ENCODE measurements at regions of chr12 and their contacts with region 1.

Region 1: GRCh38 chr12:30754709-30755394 is at the start of gene CAPRIN2:
- DNase-seq: peak; percentile 92 to 94 (median 93)
- H3K4me3 ChIP-seq: peak within 1 kb of the TSS; percentile 60 to 74
- H3K4me3 Mint-ChIP-seq: peak within 1 kb of the TSS; percentile 94 to 98 (median 96)
- H3K27ac ChIP-seq: peak within 1 kb of the TSS; percentile 67
- H3K27ac Mint-ChIP-seq: peak within 1 kb of the TSS; percentile 89 to 95 (median 94)
- H3K4me1 ChIP-seq: peaks cover 20% of the 10 kb centered on the region
- H3K4me1 Mint-ChIP-seq: peaks cover 20 to 50% (median 37%) of the 10 kb centered on the region in 4 donors
- H3K27me3 ChIP-seq: no peaks in the 10 kb centered on the region
- H3K27me3 Mint-ChIP-seq: no peaks in the 10 kb centered on the region
- total RNA-seq, gene CAPRIN2: 42.9 to 47.0 TPM

Region 2: DNA sequence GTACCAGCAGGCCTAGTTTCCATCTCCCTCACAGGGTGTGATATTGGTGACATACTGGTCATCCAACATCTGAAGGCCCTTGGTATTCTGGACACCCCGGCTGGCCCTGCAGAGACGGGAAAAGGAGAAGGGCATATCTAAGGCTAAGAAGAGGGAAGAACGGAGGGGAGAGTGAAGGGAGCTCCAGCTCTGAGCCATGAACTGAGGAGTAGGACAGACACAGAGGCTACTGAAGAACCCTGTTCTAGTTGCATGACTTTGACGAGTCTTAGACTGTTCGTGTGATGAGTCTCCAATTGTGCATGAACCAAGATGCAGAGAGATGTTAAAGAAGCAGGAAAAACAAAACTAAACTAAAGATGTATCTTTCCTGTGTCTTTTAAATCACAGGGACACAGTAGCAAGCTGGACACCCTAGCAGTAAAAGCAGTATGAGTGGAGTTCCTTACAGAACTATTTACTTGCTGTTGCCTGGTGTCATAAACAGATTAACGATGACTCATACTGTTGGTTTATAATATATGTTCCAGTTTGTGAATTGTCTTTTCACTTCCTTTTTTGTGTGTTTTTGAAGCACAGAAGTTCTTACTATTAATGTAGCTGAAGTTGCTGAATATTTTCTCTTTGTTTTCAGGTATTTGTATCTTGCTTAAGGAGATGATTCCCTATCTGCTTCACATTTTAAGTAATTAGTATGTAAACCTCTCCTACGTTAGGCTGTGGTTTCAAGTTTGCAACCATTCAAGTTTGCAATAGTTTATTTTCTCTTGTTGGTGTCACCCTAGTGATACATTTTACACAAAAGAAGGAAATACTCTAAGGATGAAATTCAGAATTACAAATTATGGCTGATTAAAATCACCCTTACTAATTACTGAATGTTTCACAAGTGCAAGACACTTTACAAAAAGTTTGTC is 1590.1 kb before region 1 on chr12:
- CTCF ChIA-PET with region 1: no interaction called
- POLR2A ChIA-PET with region 1: no interaction called
- intact Hi-C with region 1: loop called (anchors 10 kb)
- DNase-seq: peak in 4 of 5 donors; percentile 8 to 37 (median 24)
- H3K4me3 ChIP-seq: no peak overlapping the region
- H3K4me3 Mint-ChIP-seq: peak overlapping the region in 5 of 8 donors; percentile 15 to 37 (median 26)
- H3K27ac ChIP-seq: peak overlapping the region; percentile 1
- H3K27ac Mint-ChIP-seq: peak overlapping the region; percentile 55 to 91 (median 64)
- H3K4me1 ChIP-seq: peaks cover 22% of the 10 kb centered on the region
- H3K4me1 Mint-ChIP-seq: peaks cover 24 to 37% (median 29%) of the 10 kb centered on the region in 4 donors
- H3K27me3 ChIP-seq: no peaks in the 10 kb centered on the region
- H3K27me3 Mint-ChIP-seq: no peaks in the 10 kb centered on the region

Region 3: GRCh38 chr12:29380536-29381523 is 1374.0 kb before region 1 on chr12 and contains the start of gene ERGIC2:
- CTCF ChIA-PET with region 1: no interaction called
- POLR2A ChIA-PET with region 1: interaction called, 7 read pairs
- intact Hi-C with region 1: loop called (anchors 1 kb)
- DNase-seq: peak; percentile 93 to 96 (median 96)
- H3K4me3 ChIP-seq: peak within 1 kb of the TSS; percentile 92 to 100
- H3K4me3 Mint-ChIP-seq: peak within 1 kb of the TSS; percentile 89 to 98 (median 94)
- H3K27ac ChIP-seq: peak within 1 kb of the TSS; percentile 95
- H3K27ac Mint-ChIP-seq: peak within 1 kb of the TSS; percentile 94 to 99 (median 98)
- H3K4me1 ChIP-seq: peaks cover 27% of the 10 kb centered on the region
- H3K4me1 Mint-ChIP-seq: peaks cover 24 to 57% (median 46%) of the 10 kb centered on the region in 4 donors
- H3K27me3 ChIP-seq: no peaks in the 10 kb centered on the region
- H3K27me3 Mint-ChIP-seq: no peaks in the 10 kb centered on the region
- total RNA-seq, gene ERGIC2: 74.9 to 82.9 TPM

Region 4: DNA sequence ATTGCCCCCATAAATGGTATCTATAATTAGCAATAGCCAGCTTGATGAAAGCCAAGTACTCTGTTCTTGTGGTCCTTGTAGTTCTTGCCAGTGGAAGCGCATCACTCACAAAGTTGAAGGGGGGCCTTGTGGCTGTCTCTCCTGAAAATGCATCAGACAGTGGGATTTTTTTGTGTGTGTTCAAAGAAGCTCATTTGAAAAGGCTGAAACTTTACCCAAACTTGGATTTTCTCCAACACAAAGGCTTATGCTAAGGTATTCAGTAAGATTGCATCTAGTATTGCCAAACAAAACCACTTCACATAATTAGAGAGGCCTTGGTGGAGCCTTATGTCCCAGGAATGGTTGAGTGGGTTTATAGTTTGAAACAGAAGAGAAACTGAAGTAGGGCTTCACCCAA is 754.5 kb before region 1 on chr12:
- CTCF ChIA-PET with region 1: no interaction called
- POLR2A ChIA-PET with region 1: no interaction called
- intact Hi-C with region 1: no loop called
- DNase-seq: no peak
- H3K4me3 ChIP-seq: no peak overlapping the region
- H3K4me3 Mint-ChIP-seq: no peak overlapping the region
- H3K27ac ChIP-seq: no peak overlapping the region
- H3K27ac Mint-ChIP-seq: no peak overlapping the region
- H3K4me1 ChIP-seq: no peaks in the 10 kb centered on the region
- H3K4me1 Mint-ChIP-seq: peaks cover 0 to 1% (median 0%) of the 10 kb centered on the region in 4 donors
- H3K27me3 ChIP-seq: no peaks in the 10 kb centered on the region
- H3K27me3 Mint-ChIP-seq: peaks cover 0 to 1% of the 10 kb centered on the region in 2 donors

Region 5: DNA sequence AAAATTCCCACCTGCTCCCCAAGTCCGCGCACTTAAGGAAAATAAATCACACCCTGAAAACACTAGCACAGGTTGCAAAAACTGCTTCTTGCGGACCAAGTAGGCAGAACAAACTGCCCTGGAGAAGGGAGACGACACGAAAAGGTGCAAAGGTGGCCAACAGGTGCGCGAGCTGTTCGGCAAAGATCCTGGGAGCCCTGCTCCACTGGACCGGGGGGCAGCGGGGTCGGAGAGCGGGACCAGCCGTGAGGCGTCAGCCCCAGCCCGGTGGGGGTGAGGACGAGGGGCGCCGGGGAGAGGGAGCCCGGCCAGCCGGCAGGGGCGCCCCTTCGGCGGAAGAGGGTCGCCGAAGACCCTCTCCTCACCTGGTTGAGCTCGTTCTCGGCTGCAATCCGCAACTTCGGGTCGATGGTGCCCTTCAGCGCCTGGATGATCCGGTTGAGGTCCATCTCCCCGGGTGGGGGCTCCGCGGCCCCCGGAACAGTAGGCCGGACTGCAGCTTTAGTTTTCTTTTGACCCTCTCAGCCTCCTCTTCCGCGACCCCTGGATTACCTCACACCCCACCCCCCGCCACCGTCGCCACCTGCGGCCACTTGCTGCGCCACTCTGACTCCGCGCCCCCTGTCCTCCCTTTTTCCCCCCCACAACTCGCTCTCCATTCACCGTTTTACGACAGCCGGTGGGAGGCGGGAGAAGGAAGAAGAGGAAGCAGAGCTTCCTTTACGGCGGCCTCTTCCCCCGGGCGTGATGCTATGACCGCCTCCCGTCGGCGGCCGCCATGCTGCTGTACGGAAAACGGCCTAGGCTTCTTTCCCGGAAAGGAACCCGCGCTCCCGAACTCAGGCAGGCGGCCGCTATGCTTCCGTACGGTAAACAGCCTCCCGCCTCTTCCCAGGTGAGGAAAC is 59.4 kb before region 1 on chr12 and contains the start of gene IPO8:
- CTCF ChIA-PET with region 1: interaction called, 12 read pairs
- POLR2A ChIA-PET with region 1: interaction called, 43 read pairs
- intact Hi-C with region 1: loop called (anchors 1 kb)
- DNase-seq: peak; percentile 79 to 87 (median 81)
- H3K4me3 ChIP-seq: peak within 1 kb of the TSS; percentile 86 to 99
- H3K4me3 Mint-ChIP-seq: peak within 1 kb of the TSS; percentile 96 to 98 (median 98)
- H3K27ac ChIP-seq: peak within 1 kb of the TSS; percentile 63
- H3K27ac Mint-ChIP-seq: peak within 1 kb of the TSS; percentile 88 to 97 (median 95)
- H3K4me1 ChIP-seq: peaks cover 35% of the 10 kb centered on the region
- H3K4me1 Mint-ChIP-seq: peaks cover 29 to 49% (median 39%) of the 10 kb centered on the region in 4 donors
- H3K27me3 ChIP-seq: no peaks in the 10 kb centered on the region
- H3K27me3 Mint-ChIP-seq: no peaks in the 10 kb centered on the region
- total RNA-seq, gene IPO8: 50.2 to 60.5 TPM

Region 6: GRCh38 chr12:30806989-30807694 is 52.3 kb after region 1 on chr12:
- CTCF ChIA-PET with region 1: interaction called, 6 read pairs
- POLR2A ChIA-PET with region 1: no interaction called
- intact Hi-C with region 1: loop called (anchors 1 kb)
- DNase-seq: peak in 4 of 5 donors; percentile 44 to 55 (median 53)
- H3K4me3 ChIP-seq: no peak overlapping the region
- H3K4me3 Mint-ChIP-seq: no peak overlapping the region
- H3K27ac ChIP-seq: no peak overlapping the region
- H3K27ac Mint-ChIP-seq: no peak overlapping the region
- H3K4me1 ChIP-seq: no peaks in the 10 kb centered on the region
- H3K4me1 Mint-ChIP-seq: no peaks in the 10 kb centered on the region
- H3K27me3 ChIP-seq: no peaks in the 10 kb centered on the region
- H3K27me3 Mint-ChIP-seq: peaks cover 11 to 12% of the 10 kb centered on the region in 2 donors

Region 7: DNA sequence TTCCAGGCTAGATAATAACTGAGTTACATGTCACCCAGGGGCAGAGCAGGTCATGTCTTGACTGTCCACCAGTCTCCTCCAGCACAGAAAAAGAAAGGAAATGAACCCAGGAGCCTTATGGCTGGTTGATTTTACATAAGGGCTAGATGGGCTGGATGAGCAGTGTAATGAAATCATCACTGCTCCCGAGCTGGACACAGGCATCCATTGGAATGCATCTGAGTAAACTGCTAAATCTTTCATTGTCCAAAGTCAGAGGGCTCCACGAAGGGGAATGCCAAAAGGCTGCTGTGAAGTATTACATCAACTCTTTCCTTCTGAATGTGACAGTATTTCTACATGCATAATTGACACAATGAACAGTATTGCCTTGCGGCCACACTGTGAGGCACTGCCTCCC is 141.6 kb after region 1 on chr12:
- CTCF ChIA-PET with region 1: no interaction called
- POLR2A ChIA-PET with region 1: no interaction called
- intact Hi-C with region 1: no loop called
- DNase-seq: no peak
- H3K4me3 ChIP-seq: no peak overlapping the region
- H3K4me3 Mint-ChIP-seq: no peak overlapping the region
- H3K27ac ChIP-seq: no peak overlapping the region
- H3K27ac Mint-ChIP-seq: no peak overlapping the region
- H3K4me1 ChIP-seq: no peaks in the 10 kb centered on the region
- H3K4me1 Mint-ChIP-seq: no peaks in the 10 kb centered on the region
- H3K27me3 ChIP-seq: no peaks in the 10 kb centered on the region
- H3K27me3 Mint-ChIP-seq: peaks cover 25 to 26% of the 10 kb centered on the region in 2 donors

Region 8: GRCh38 chr12:31325877-31326631 is 571.2 kb after region 1 on chr12 and contains the start of gene SINHCAF:
- CTCF ChIA-PET with region 1: no interaction called
- POLR2A ChIA-PET with region 1: interaction called, 3 read pairs
- intact Hi-C with region 1: loop called (anchors 2 kb)
- DNase-seq: peak; percentile 97 to 99 (median 98)
- H3K4me3 ChIP-seq: peak within 1 kb of the TSS; percentile 88 to 89
- H3K4me3 Mint-ChIP-seq: peak within 1 kb of the TSS; percentile 88 to 99 (median 97)
- H3K27ac ChIP-seq: peak within 1 kb of the TSS; percentile 87
- H3K27ac Mint-ChIP-seq: peak within 1 kb of the TSS; percentile 93 to 99 (median 98)
- H3K4me1 ChIP-seq: peaks cover 25% of the 10 kb centered on the region
- H3K4me1 Mint-ChIP-seq: peaks cover 21 to 44% (median 27%) of the 10 kb centered on the region in 4 donors
- H3K27me3 ChIP-seq: no peaks in the 10 kb centered on the region
- H3K27me3 Mint-ChIP-seq: peaks cover 0 to 2% of the 10 kb centered on the region in 2 donors
- total RNA-seq, gene SINHCAF: 95.8 to 98.5 TPM

Region 9: DNA sequence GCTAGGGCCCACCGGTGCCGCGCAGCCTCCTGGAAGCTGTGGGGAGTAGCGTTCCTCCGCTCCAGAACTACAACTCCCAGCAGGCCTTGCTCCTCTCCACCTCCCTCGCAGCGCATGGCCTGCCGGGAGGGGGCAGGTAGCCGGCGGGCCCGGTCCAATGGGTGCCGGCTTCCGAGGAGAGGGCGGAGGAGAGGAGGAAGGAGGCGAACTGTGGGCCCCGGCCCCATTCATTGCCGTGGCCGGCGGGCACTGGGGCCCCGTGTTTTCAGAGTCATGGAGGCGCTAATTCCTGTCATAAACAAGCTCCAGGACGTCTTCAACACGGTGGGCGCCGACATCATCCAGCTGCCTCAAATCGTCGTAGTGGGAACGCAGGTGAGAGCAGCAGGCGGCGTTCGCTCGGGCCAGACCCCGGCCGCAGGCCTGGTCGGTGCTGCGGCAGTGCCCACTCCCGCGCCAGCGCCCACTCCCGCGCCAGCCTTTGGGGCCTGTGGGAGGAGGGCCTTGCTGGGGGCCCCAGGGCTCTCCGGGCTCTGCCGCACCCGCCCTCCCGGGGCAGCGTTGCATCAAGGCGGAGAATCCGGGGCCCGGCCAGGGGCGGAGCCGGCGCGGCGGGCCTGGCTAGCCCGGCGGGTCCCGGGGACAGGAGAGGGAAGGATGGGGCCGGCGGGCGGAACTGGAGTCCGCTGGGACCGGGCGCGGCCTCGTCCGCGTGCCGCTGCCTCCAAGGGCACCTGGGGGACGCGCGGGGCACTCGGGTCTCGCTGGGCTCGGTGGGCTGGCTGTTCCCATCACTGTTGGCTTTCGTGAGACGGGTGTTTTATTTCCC is 1924.5 kb after region 1 on chr12 and contains the start of gene DNM1L:
- CTCF ChIA-PET with region 1: no interaction called
- POLR2A ChIA-PET with region 1: interaction called, 3 read pairs
- intact Hi-C with region 1: loop called (anchors 5 kb)
- DNase-seq: peak; percentile 91 to 95 (median 93)
- H3K4me3 ChIP-seq: peak within 1 kb of the TSS; percentile 65 to 69
- H3K4me3 Mint-ChIP-seq: peak within 1 kb of the TSS; percentile 89 to 97 (median 94)
- H3K27ac ChIP-seq: peak within 1 kb of the TSS; percentile 87
- H3K27ac Mint-ChIP-seq: peak within 1 kb of the TSS; percentile 80 to 97 (median 94)
- H3K4me1 ChIP-seq: peaks cover 18% of the 10 kb centered on the region
- H3K4me1 Mint-ChIP-seq: peaks cover 14 to 37% (median 27%) of the 10 kb centered on the region in 4 donors
- H3K27me3 ChIP-seq: no peaks in the 10 kb centered on the region
- H3K27me3 Mint-ChIP-seq: no peaks in the 10 kb centered on the region
- total RNA-seq, gene DNM1L: 42.7 to 50.1 TPM

Measured in CD4-positive, alpha-beta memory T cell (primary cell).